PC-3 (cell line): ENCODE measurements at regions of chr6 and their contacts with region 1.

Region 1: DNA sequence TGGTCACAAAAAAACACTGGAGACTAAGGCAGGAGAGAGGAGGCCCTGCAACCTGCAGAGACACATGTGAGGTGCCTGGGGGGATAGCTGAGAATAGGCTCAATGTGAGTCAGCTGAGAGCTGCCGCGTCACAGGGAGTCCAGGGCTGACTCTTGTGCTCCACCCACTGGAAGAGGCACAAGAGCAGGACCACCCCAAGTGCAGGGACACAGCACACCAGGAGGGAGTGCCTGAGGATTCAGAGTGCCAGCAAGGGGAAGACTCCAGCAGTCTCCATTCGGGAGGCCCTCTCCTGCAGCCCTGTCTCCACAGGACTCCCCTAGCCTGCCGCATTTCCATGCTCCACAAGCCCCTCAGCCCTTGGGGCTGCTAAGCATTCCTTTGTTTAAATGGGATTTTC is 105.5 kb downstream of the HUS1B start:
- DNase-seq: peak; percentile 47
- ATAC-seq: peak; percentile 84
- H3K4me3 ChIP-seq: no peak overlapping the region
- H3K27ac ChIP-seq: no peak overlapping the region
- H3K4me1 ChIP-seq: no peaks in the 10 kb centered on the region
- H3K27me3 ChIP-seq: no peaks in the 10 kb centered on the region
- CTCF ChIP-seq: peak; percentile 45

Region 2: GRCh38 chr6:291697-292505 is 259.5 kb before region 1 on chr6 and contains the start of gene DUSP22:
- CTCF ChIA-PET with region 1: no interaction called
- POLR2A ChIA-PET with region 1: no interaction called
- intact Hi-C with region 1: loop called (anchors 10 kb)
- DNase-seq: peak; percentile 85
- ATAC-seq: peak; percentile 84
- H3K4me3 ChIP-seq: peak within 1 kb of the TSS; percentile 74
- H3K27ac ChIP-seq: peak within 1 kb of the TSS; percentile 52
- H3K4me1 ChIP-seq: peaks cover 15% of the 10 kb centered on the region
- H3K27me3 ChIP-seq: no peaks in the 10 kb centered on the region
- CTCF ChIP-seq: no peak
- total RNA-seq, gene DUSP22: 26.3 and 37.8 TPM in 2 replicates

Region 3: GRCh38 chr6:391559-392440 is 159.6 kb before region 1 on chr6 and contains the start of gene IRF4:
- CTCF ChIA-PET with region 1: no interaction called
- POLR2A ChIA-PET with region 1: no interaction called
- intact Hi-C with region 1: loop called (anchors 10 kb)
- DNase-seq: no peak
- ATAC-seq: no peak
- H3K4me3 ChIP-seq: no peak within 1 kb of the TSS
- H3K27ac ChIP-seq: no peak within 1 kb of the TSS
- H3K4me1 ChIP-seq: no peaks in the 10 kb centered on the region
- H3K27me3 ChIP-seq: peaks cover 68% of the 10 kb centered on the region
- CTCF ChIP-seq: no peak
- total RNA-seq, gene IRF4: 0.15 TPM in 1 of 2 replicates, not detected in the other